ENCODE measurements at regions of chr9 and their contacts with region 1.

Region 1: DNA sequence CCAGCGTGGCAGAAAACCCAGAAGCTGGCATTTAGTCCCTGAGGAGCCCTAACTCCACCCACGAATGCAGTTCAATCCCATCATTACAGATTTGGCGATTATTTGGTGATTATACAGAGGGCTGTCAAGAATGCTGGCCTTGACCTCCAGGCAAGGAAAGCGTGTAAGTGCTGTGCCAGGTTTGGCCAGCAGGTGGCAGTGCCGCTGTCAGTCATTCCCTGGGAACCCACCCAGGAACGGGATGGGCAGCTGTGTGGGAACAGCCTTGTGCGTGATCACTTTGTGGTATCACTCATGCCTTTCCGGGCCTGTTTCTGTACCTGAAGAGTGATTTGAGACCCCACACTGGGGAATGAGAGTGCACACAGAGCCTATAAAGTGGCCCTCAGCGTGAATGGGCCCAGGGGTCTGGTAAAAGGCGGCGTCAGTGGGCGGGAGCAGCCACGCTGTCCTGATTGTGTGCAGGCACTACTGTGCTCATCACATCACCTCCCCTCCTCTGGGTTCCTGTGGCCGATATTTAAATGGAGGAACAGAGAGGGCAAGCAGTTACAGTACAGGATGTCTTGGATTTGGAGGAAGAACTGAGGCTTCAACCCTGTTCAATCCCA is 215.6 kb downstream of the ROR2 start:
- DNase-seq: peak; percentile 46 to 78
- ATAC-seq: peak; percentile 72 to 86; a peak in 5 of 6 replicates
- H3K4me3 ChIP-seq: no peak overlapping the region
- H3K27ac ChIP-seq: no peak overlapping the region
- H3K4me1 ChIP-seq: no peaks in the 10 kb centered on the region
- CTCF ChIP-seq: peak; percentile 74
- EP300 ChIP-seq: no peak
- POLR2A ChIP-seq: no peak
- RAD21 ChIP-seq: peak; percentile 36 to 45; a peak in 3 of 5 replicates

Region 2: DNA sequence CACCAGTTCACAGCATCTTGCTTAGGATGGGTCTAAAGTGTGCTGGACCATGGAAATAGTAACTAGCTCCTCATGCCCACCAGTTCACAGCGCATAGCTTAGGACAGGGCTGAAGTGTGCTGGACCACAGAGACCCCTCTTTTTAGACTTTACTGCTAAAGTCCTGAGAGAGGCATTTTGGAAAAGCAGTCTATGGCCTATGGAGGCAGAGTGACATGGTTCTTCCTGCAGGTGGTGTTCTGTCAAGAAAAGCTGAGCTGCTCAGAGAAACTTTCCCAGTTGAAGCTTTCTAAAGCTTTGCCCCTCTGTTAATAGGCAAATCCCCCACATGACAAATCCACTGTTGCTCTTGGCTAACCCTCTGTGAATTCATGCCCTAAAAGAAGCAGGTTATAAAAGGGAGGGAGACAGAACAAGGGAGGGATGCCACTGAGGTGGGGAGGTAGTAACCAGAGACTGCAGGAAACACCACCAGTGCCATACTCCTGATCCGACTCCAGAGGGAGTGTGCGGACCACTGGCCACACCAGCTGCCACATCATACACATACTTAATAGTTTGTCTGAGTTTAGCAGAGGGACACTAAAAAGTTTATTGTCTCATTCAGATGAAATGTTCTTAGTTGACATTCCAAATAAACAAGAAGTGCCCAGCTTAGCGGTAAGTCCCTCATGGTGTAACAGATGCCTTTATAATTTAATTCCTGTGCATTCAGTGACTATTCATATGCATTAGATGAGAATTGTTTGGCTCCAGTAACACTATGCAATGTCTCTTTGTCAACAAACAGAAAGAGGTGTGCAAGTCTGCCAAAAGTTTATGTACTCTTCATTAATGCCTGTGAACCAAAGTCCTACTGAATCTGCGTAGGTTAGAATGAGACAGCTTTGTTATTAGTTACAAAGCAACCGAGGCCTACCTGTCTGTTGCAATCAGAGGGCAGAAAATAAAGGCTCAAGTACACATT is 74.7 kb before region 1 on chr9:
- CTCF ChIA-PET with region 1: no interaction called
- POLR2A ChIA-PET with region 1: no interaction called
- DNase-seq: peak; percentile 16 to 35
- ATAC-seq: peak; percentile 90 to 93
- H3K4me3 ChIP-seq: no peak overlapping the region
- H3K27ac ChIP-seq: no peak overlapping the region
- H3K4me1 ChIP-seq: no peaks in the 10 kb centered on the region
- CTCF ChIP-seq: peak; percentile 28; the same call in 2 of the 3 replicates
- EP300 ChIP-seq: no peak
- POLR2A ChIP-seq: no peak
- RAD21 ChIP-seq: peak; percentile 31 to 44; a peak in 2 of 5 replicates

Region 3: GRCh38 chr9:91720751-91721705 is 13.4 kb before region 1 on chr9:
- CTCF ChIA-PET with region 1: interaction called, 36 read pairs
- POLR2A ChIA-PET with region 1: no interaction called
- DNase-seq: no peak
- ATAC-seq: peak in 1 of 2 experiments; percentile 39; a peak in 1 of 6 replicates
- H3K4me3 ChIP-seq: no peak overlapping the region
- H3K27ac ChIP-seq: no peak overlapping the region
- H3K4me1 ChIP-seq: no peaks in the 10 kb centered on the region
- CTCF ChIP-seq: no peak
- EP300 ChIP-seq: no peak
- POLR2A ChIP-seq: no peak
- RAD21 ChIP-seq: no peak

Region 4: DNA sequence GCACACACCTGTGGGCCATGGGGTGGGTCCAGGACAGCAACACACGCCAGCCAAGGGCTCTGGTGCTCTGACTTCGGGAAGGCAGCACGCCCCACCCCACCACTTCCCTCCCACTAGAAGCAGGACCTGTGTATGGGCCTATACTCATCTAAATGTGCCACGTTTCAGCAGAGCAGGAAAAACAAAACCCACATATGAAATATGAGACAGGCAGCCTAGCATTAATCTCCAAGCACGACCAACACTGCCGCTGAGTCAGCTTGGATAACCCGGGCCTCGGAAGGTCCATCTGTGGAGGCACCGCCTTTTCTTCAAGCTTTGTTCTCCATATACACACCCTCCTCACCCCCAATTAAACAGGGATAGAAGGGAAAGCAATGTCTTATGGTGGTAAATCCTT is 12.4 kb after region 1 on chr9:
- CTCF ChIA-PET with region 1: interaction called, 21 read pairs
- POLR2A ChIA-PET with region 1: no interaction called
- DNase-seq: no peak
- ATAC-seq: no peak
- H3K4me3 ChIP-seq: no peak overlapping the region
- H3K27ac ChIP-seq: no peak overlapping the region
- H3K4me1 ChIP-seq: no peaks in the 10 kb centered on the region
- CTCF ChIP-seq: no peak
- EP300 ChIP-seq: no peak
- POLR2A ChIP-seq: no peak
- RAD21 ChIP-seq: no peak

Region 5: DNA sequence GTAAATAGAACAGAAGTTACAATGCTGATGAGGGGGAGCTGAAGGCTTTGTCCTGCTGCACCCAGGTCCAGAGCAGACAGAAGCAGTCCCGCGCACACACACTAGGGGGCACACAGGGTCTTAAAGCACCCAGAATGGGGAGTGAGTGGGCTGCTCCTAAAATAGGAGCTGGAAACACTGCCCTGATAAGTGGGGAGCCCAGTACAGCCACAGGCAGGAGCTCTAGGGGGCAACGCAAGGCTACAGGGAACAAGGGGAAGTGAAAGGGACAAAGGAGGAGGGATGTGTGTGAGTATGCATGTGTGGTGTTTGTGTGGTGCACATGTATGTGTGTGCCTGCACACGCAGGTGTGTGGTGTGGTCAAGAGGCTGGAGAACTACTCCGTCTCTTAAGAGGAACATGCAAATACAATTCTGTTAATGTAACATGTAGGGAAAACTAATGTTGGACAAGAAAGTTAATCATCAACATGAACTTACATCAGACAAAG is 24.1 kb after region 1 on chr9:
- CTCF ChIA-PET with region 1: interaction called, 13 read pairs
- POLR2A ChIA-PET with region 1: no interaction called
- DNase-seq: peak; percentile 55 to 57
- ATAC-seq: peak; percentile 75 to 96; a peak in 4 of 6 replicates
- H3K4me3 ChIP-seq: no peak overlapping the region
- H3K27ac ChIP-seq: no peak overlapping the region
- H3K4me1 ChIP-seq: 0 out of 3 replicates have a peak, but pooled peaks cover 3% of the 10 kb centered on the region
- CTCF ChIP-seq: peak; percentile 42; the same call in 2 of the 3 replicates
- EP300 ChIP-seq: no peak
- POLR2A ChIP-seq: no peak
- RAD21 ChIP-seq: peak; percentile 38 to 51; a peak in 3 of 5 replicates

Region 6: DNA sequence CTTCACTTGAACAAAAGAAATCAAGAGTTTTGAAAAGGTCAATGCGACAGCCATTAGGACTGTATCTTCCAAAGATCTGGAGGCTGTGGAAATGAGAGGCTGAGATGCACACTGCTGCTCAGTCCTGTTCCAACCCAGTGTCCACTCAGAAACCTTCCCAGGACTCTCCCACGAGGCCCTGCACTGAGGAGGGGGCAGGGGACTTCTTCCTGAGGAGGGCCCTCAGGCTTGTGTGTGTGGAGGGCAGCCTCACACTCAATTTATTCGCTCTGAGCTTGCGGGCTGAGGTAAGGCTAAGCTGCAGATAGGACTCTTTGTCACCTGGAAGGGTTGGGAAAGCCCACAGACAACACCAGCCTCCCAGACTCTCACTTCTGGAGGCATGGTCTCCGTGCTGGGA is 285.2 kb after region 1 on chr9:
- CTCF ChIA-PET with region 1: no interaction called
- POLR2A ChIA-PET with region 1: no interaction called
- DNase-seq: no peak
- ATAC-seq: peak; percentile 39 to 47; a peak in 1 of 6 replicates
- H3K4me3 ChIP-seq: no peak overlapping the region
- H3K27ac ChIP-seq: no peak overlapping the region
- H3K4me1 ChIP-seq: no peaks in the 10 kb centered on the region
- CTCF ChIP-seq: no peak
- EP300 ChIP-seq: no peak
- POLR2A ChIP-seq: no peak
- RAD21 ChIP-seq: no peak

Measured in A549 (cell line).